ENCODE measurements at regions of chr15 and their contacts with region 1.

Region 1: GRCh38 chr15:80461356-80462095 is 57.3 kb downstream of the ARNT2 start:
- DNase-seq: no peak

Region 2: GRCh38 chr15:80350941-80351610 is 110.5 kb before region 1 on chr15:
- intact Hi-C with region 1: no loop called
- DNase-seq: no peak

Region 3: GRCh38 chr15:80418892-80419537 is 42.5 kb before region 1 on chr15:
- intact Hi-C with region 1: no loop called
- DNase-seq: no peak

Region 4: DNA sequence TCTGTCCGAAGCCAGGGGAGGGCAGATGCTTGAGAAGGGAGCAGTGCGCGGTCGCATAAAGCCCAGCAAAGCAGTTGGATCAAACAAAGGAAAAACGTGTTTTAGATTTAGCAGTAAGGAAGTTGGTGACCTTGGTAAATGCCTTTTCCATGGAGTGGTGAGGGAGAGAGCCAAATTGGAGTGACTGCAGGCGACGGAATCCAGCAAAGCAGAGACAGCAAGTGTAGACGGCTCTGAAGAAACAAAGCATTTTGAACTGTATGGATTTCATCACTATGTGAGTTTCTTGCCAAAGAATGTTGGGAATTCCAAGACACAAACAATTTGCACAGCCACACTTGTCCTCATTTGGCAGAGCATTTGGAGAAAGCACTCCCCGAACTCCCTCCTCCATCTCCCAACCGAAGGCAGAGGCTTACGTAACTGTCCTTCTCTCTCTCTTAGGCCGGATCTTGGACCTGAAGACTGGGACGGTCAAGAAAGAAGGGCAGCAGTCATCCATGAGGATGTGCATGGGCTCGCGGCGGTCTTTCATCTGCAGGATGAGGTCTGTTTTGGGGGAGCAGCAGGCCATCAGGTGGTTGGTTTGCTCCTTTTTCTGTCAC is 46.3 kb after region 1 on chr15:
- intact Hi-C with region 1: loop called (anchors 5 kb)
- DNase-seq: no peak